ENCODE measurements at regions of chr13 and their contacts with region 1.

Region 1: DNA sequence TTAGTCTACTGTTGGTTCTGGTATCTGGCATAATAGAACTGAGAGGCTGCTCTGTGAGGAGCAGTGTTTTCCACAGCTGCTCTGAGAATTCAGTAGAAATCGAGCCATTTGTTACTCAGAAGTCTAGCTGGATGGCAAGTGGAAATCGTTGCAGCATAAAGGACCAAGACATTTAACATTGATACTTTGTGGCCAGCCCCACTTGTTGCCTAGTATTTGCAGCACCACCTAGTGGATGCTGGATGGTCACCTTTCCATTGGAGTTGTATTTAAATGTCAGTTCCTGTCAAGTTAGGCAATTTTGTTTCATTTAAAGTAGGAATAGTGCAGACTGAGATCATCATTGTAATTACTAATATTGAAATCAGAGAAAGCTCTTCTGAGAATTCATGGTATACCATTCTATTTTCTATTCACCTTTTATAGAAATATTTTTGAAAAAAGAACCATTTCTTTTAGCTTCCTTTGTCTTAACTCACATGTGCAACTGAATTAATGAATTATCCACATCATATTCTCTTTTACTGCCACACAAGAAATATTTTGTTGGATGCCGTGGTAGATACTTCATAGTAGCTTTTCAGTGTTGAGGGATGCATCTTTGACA is 64.6 kb downstream of the PDS5B start:
- DNase-seq: peak; percentile 53
- ATAC-seq: peak; percentile 89
- H3K4me3 Mint-ChIP-seq: no peak overlapping the region
- H3K27ac Mint-ChIP-seq: 0 out of 2 replicates have a peak overlapping the region, but pooled peaks have one; percentile 34
- H3K4me1 Mint-ChIP-seq: peaks cover 9% of the 10 kb centered on the region
- H3K27me3 Mint-ChIP-seq: no peaks in the 10 kb centered on the region
- CTCF ChIP-seq: peak; percentile 15; the same call in 1 of the 2 replicates

Region 2: GRCh38 chr13:32581177-32581786 is 69.5 kb before region 1 on chr13:
- CTCF ChIA-PET with region 1: interaction called, 34 read pairs
- POLR2A ChIA-PET with region 1: no interaction called
- DNase-seq: no peak
- ATAC-seq: no peak
- H3K4me3 Mint-ChIP-seq: no peak overlapping the region
- H3K27ac Mint-ChIP-seq: no peak overlapping the region
- H3K4me1 Mint-ChIP-seq: peaks cover 11% of the 10 kb centered on the region
- H3K27me3 Mint-ChIP-seq: peaks cover 15% of the 10 kb centered on the region
- CTCF ChIP-seq: no peak

Region 3: DNA sequence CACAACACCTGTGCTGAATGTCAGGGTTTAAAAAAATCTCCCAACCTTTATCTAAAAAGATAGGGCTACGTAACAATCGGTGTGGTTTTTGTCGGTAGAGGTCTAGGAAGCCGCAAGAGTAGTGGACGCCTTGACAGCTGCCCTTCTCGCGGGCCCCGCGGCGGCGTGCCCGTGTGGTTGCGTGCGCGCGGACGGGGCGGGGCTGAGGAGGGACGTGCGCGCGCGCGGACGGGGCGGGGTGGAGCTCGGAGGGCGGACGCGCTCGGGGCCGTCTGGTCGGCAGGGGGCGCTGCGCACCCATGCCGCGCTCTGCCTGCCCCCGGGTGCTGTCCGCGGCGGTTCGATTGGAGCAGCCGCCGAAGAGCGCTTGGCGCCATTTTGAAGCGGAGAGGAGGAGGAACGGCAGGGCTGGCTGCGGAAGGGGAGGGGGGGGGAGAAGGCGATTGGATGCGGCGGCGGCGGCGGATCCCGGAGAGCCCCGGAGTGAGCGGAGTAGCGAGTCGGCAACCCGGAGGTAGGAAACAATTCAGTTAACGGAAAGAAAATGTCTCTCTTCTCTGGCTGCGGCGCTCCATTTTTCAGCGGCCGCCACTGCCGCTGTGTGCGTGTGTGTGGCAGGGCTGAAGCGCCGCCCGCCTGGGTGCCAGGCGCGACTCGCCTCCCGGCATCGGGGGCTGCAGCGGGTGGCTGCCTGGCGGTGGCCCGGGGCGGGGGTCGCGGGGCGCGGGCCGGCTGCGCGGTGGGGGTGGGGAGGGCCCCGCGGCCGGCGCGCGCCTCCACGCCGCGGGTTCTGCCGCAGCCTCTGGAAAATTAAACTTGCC is 64.5 kb before region 1 on chr13 and contains the start of gene PDS5B:
- CTCF ChIA-PET with region 1: interaction called, 34 read pairs
- POLR2A ChIA-PET with region 1: no interaction called
- DNase-seq: peak; percentile 92
- ATAC-seq: peak; percentile 91
- H3K4me3 Mint-ChIP-seq: peak within 1 kb of the TSS; percentile 86
- H3K27ac Mint-ChIP-seq: peak within 1 kb of the TSS; percentile 83
- H3K4me1 Mint-ChIP-seq: peaks cover 38% of the 10 kb centered on the region
- H3K27me3 Mint-ChIP-seq: peaks cover 8% of the 10 kb centered on the region
- CTCF ChIP-seq: peak; percentile 89
- total RNA-seq, gene PDS5B: 41.3 to 44.5 TPM (median 44.3 TPM) in 3 replicates

Region 4: GRCh38 chr13:32639502-32640105 is 11.2 kb before region 1 on chr13:
- CTCF ChIA-PET with region 1: interaction called, 29 read pairs
- POLR2A ChIA-PET with region 1: no interaction called
- DNase-seq: peak; percentile 19
- ATAC-seq: peak; percentile 74
- H3K4me3 Mint-ChIP-seq: no peak overlapping the region
- H3K27ac Mint-ChIP-seq: no peak overlapping the region
- H3K4me1 Mint-ChIP-seq: peaks cover 27% of the 10 kb centered on the region
- H3K27me3 Mint-ChIP-seq: no peaks in the 10 kb centered on the region
- CTCF ChIP-seq: peak; percentile 50

Region 5: DNA sequence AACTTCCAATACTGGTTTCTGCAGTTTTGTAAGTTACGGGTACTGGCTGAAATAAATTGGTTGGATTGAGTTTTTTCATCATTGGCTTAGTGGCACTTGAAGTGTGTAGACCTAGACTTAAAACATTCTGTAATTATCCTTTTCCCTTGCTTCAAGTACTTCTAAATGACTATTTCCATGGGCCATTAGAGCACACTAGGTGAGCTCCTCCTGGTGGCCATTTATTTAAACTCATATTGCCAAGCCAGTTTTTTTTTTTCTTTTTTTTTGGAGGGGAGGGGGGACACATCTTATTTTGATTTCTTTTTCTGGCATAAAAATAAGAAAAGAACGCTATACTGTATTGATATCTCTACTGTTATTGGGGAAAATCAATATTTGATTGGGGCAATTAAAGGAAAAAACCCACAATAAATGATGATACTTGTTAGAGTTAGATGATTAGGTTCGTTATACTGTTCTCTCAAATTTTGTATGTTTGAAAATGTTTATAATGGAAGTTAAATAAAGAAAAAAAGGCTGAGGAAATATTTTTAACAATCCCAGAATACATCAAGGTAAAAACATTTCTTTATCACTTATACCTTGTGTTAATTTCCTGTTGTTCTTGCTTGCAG is 18.3 kb after region 1 on chr13:
- CTCF ChIA-PET with region 1: interaction called, 17 read pairs
- POLR2A ChIA-PET with region 1: no interaction called
- DNase-seq: no peak
- ATAC-seq: no peak; the same call in 1 of the 2 replicates
- H3K4me3 Mint-ChIP-seq: no peak overlapping the region
- H3K27ac Mint-ChIP-seq: no peak overlapping the region
- H3K4me1 Mint-ChIP-seq: no peaks in the 10 kb centered on the region
- H3K27me3 Mint-ChIP-seq: no peaks in the 10 kb centered on the region
- CTCF ChIP-seq: peak; percentile 31; the same call in 1 of the 2 replicates